Activated naive CD4-positive, alpha-beta T cell treated with anti-CD3 and anti-CD28 coated beads for 36 hours (primary cell): ENCODE measurements at regions of chr4 and their contacts with region 1.

Region 1: GRCh38 chr4:153940916-153941315 is 152.0 kb upstream of the SFRP2 start:
- DNase-seq: no peak
- H3K4me3 Mint-ChIP-seq: no peak overlapping the region
- H3K27ac Mint-ChIP-seq: no peak overlapping the region
- H3K4me1 Mint-ChIP-seq: peaks cover 13% of the 10 kb centered on the region
- H3K27me3 Mint-ChIP-seq: peaks cover 24% of the 10 kb centered on the region

Region 2: GRCh38 chr4:153159728-153160221 is 781.1 kb before region 1 on chr4:
- CTCF ChIA-PET with region 1: no interaction called
- intact Hi-C with region 1: loop called (anchors 10 kb)
- DNase-seq: no peak
- H3K4me3 Mint-ChIP-seq: no peak overlapping the region
- H3K27ac Mint-ChIP-seq: peak overlapping the region; percentile 90
- H3K4me1 Mint-ChIP-seq: peaks cover 54% of the 10 kb centered on the region
- H3K27me3 Mint-ChIP-seq: no peaks in the 10 kb centered on the region

Region 3: GRCh38 chr4:153791746-153792617 is 148.9 kb before region 1 on chr4:
- CTCF ChIA-PET with region 1: interaction called, 5 read pairs
- intact Hi-C with region 1: loop called (anchors 1 kb)
- DNase-seq: peak; percentile 85
- H3K4me3 Mint-ChIP-seq: peak overlapping the region; percentile 67
- H3K27ac Mint-ChIP-seq: no peak overlapping the region
- H3K4me1 Mint-ChIP-seq: peaks cover 44% of the 10 kb centered on the region
- H3K27me3 Mint-ChIP-seq: peaks cover 79% of the 10 kb centered on the region

Region 4: DNA sequence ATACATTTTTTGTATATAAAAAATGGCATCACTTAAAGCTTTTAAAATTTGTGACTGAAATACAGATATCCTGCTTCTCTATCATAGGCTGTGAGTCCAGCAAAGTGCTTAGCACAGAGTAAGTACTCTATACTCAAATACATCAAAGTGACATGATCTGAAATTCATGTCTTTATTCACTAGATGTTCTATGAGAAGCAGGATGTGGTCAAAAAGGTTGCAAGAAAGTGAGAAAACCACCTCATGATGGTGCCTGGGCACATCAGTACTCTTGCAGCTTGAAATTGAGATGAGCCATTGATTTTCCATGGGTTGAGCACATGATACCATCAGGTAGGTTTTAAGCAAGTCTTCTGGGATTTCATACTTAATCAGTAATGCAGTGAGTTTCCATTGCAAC is 131.6 kb before region 1 on chr4:
- CTCF ChIA-PET with region 1: no interaction called
- intact Hi-C with region 1: loop called (anchors 2 kb)
- DNase-seq: peak; percentile 59
- H3K4me3 Mint-ChIP-seq: no peak overlapping the region
- H3K27ac Mint-ChIP-seq: no peak overlapping the region
- H3K4me1 Mint-ChIP-seq: peaks cover 17% of the 10 kb centered on the region
- H3K27me3 Mint-ChIP-seq: no peaks in the 10 kb centered on the region

Region 5: GRCh38 chr4:153873741-153874140 is 67.2 kb before region 1 on chr4:
- CTCF ChIA-PET with region 1: no interaction called
- intact Hi-C with region 1: no loop called
- DNase-seq: no peak
- H3K4me3 Mint-ChIP-seq: no peak overlapping the region
- H3K27ac Mint-ChIP-seq: no peak overlapping the region
- H3K4me1 Mint-ChIP-seq: no peaks in the 10 kb centered on the region
- H3K27me3 Mint-ChIP-seq: peaks cover 7% of the 10 kb centered on the region

Region 6: DNA sequence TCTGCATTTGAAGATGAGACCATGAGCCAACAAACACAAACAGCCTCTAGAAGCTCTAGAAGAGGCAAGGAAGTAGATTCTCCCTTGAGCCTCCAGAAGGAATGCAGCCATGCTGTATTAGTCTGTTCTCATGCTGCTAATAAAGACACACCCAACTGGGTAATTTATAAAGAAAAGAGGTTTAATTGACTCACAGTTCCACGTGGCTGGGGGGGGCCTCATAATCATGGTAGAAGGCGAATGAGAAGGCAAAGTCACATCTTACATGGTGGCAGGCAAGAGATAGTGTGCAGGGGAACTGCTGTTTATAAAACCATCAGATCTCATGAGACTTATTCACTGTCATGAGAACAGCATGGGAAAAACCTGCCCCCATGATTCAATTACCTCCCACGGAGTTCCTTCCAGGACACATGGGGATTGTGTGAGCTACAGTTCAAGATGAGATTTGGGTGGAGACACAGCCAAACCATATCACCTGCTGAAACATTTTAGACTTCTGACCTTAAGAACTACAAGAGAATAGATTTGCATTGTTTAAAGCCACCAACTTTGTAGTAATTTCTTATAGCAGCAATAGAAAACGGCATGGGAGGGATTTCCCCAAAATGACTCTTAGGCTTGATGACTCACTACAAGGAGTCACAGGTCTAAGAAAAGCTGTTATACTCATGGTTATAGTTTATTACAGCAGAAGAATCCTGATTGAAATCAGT is 132.3 kb after region 1 on chr4:
- CTCF ChIA-PET with region 1: interaction called, 4 read pairs
- intact Hi-C with region 1: loop called (anchors 1 kb)
- DNase-seq: peak; percentile 37
- H3K4me3 Mint-ChIP-seq: no peak overlapping the region
- H3K27ac Mint-ChIP-seq: peak overlapping the region; percentile 46
- H3K4me1 Mint-ChIP-seq: peaks cover 8% of the 10 kb centered on the region
- H3K27me3 Mint-ChIP-seq: peaks cover 21% of the 10 kb centered on the region

Region 7: GRCh38 chr4:154164931-154165839 is 224.3 kb after region 1 on chr4:
- CTCF ChIA-PET with region 1: no interaction called
- intact Hi-C with region 1: loop called (anchors 2 kb)
- DNase-seq: peak; percentile 66
- H3K4me3 Mint-ChIP-seq: no peak overlapping the region
- H3K27ac Mint-ChIP-seq: peak overlapping the region; percentile 48
- H3K4me1 Mint-ChIP-seq: peaks cover 15% of the 10 kb centered on the region
- H3K27me3 Mint-ChIP-seq: peaks cover 13% of the 10 kb centered on the region